Activated T-helper 2 cell treated with anti-CD3 and anti-CD28 coated beads, Interferon-gamma antibody, Interleukin-2, Interleukin-4, amounts not matched to agents 10 μg/mL and 5 μg/mL and 100 μg/mL, durations not matched to agents 14 hours and 24 hours and 36 hours (primary cell): ENCODE measurements at regions of chr5 and their contacts with region 1.

Region 1: DNA sequence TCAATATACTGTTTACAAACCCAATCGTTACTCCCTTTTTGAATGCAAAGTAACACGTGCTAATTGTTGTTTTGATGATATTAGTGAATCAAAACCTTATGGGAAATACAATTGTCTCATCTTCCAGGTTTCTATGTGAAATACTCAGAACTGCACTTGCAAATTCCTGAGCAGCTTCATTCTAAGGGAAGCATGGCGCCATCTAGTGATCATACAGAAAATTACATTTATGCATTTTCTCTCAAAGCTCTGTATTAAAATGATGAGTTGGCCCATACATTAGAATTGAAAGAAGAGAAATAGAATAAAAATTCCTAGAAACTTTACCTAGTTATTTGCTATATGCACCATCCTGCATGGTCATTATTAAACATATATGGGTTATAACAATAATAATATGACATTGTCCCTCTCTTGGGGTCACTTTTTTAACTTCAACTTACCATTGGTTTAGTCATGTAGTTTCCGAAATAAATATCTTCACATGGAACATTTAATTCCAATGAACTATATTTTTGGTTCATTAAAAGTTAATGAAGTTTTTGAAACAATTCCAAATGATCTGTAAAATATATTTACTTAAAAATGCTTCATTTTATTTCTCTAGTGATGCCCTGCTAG is 220.0 kb downstream of the PDE4D start:
- DNase-seq: no peak
- H3K4me3 Mint-ChIP-seq: no peak overlapping the region
- H3K27ac Mint-ChIP-seq: no peak overlapping the region
- H3K4me1 Mint-ChIP-seq: no peaks in the 10 kb centered on the region
- H3K27me3 Mint-ChIP-seq: peaks cover 4% of the 10 kb centered on the region

Region 2: DNA sequence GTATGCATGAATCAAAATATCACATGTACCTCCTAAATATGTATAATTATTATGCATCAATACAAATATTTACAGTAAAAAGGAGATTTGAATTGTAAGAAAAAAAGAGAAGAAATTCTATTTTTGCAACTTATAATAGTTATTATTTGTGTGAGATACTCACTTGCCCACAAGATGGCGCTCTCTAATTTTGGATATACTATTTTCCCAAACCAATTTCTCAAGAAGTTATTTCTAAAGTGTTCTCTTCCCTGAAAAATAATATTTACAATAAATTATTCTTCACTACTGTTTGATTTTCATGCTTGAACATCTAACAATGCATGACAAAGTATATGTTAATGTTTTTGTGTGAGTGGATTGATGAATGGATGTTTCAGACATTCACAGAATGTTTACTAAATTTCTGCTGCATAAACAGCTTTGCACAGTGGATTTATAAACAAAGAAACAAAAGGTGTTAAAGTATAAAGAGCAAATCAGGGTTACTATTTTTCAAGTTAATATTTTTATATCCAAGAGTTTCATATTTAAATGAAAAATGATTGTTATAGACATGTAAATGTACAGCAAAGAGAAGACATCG is 283.4 kb before region 1 on chr5:
- intact Hi-C with region 1: loop called (anchors 2 kb)
- DNase-seq: no peak
- H3K4me3 Mint-ChIP-seq: no peak overlapping the region
- H3K27ac Mint-ChIP-seq: no peak overlapping the region
- H3K4me1 Mint-ChIP-seq: no peaks in the 10 kb centered on the region
- H3K27me3 Mint-ChIP-seq: peaks cover 15% of the 10 kb centered on the region

Region 3: DNA sequence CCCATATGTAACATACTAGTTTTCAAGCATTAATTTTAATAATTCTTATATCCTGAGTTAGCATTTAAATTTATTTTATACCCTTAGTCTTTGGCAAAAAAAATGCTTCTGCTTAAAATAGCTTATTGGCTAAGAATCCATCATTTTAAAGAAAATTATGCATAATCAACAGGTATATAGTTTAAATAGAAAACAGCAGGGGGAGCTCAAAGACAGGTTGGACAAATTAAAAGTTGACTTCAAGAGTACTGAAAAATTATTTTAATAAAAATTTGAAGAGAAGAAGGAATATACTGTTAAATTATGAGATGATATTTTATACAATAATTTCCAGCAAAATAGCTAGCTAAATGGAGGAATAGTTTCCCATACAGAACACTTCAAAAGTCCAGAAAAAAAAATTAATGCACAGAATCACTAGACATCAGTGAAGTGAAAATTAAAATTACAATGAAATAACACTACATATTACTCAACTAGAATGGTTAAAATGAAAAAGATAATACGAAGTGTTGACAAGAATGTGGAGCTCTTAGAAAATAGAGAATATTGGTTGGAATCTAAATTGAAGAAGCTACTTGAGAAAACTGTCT is 167.2 kb before region 1 on chr5:
- intact Hi-C with region 1: loop called (anchors 1 kb)
- DNase-seq: no peak
- H3K4me3 Mint-ChIP-seq: no peak overlapping the region
- H3K27ac Mint-ChIP-seq: no peak overlapping the region
- H3K4me1 Mint-ChIP-seq: no peaks in the 10 kb centered on the region
- H3K27me3 Mint-ChIP-seq: peaks cover 5% of the 10 kb centered on the region